Calu3 (cell line): ENCODE measurements at regions of chr14 and their contacts with region 1.

Region 1: DNA sequence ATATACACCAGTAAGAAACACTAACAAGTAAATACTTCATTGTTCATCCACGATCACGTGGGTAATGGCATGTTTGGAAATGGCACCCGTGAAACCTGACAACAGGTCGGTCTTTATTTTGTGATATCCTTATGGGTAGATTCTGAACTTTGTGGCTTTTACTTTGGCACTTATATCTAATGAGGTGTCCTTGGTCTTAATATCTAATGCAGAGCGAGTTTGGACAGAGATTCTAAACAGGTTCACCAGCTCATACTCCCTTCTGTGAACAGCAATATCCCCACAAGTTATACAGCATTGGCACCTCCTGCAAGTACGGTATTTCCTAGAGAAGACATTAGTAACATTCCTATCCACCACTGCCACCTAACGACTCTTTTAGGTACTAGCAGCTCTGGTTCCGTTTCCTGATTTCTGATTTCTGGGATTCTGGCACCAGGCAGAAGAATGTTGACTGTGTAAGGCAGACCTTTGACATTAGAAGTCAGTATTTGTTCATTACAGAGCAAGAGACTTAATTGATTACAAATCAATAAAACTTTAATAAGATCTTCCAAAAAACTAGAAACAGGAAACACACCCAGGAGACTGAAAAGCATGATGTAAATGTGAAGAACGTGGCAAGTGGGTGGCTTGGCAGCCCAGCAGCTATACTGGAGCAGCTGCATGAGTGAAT is 2.4 kb downstream of the ANG start:
- DNase-seq: peak; percentile 54
- H3K4me3 Mint-ChIP-seq: no peak overlapping the region
- H3K27ac Mint-ChIP-seq: no peak overlapping the region
- H3K4me1 Mint-ChIP-seq: peaks cover 19% of the 10 kb centered on the region
- H3K27me3 Mint-ChIP-seq: no peaks in the 10 kb centered on the region
- CTCF ChIP-seq: peak; percentile 48

Region 2: GRCh38 chr14:20662968-20663732 is 27.8 kb before region 1 on chr14:
- CTCF ChIA-PET with region 1: interaction called, 17 read pairs
- intact Hi-C with region 1: loop called (anchors 1 kb)
- DNase-seq: peak; percentile 76
- H3K4me3 Mint-ChIP-seq: peak overlapping the region; percentile 37
- H3K27ac Mint-ChIP-seq: peak overlapping the region; percentile 59
- H3K4me1 Mint-ChIP-seq: peaks cover 13% of the 10 kb centered on the region
- H3K27me3 Mint-ChIP-seq: peaks cover 35% of the 10 kb centered on the region
- CTCF ChIP-seq: peak; percentile 59